ENCODE measurements at regions of chr22 and their contacts with region 1.

Region 1: GRCh38 chr22:30634471-30635233 is 929 bp upstream of the SLC35E4 start:
- DNase-seq: peak; percentile 83 to 93 (median 85)
- ATAC-seq: peak; percentile 65 to 82 (median 74)
- H3K4me3 ChIP-seq: peak overlapping the region in 11 of 12 donors; percentile 6 to 90 (median 77)
- H3K27ac ChIP-seq: peak overlapping the region; percentile 23 to 98 (median 88)
- H3K4me1 ChIP-seq: peaks cover 0 to 37% (median 27%) of the 10 kb centered on the region in 12 donors
- H3K27me3 ChIP-seq: no peaks in the 10 kb centered on the region
- CTCF ChIP-seq: peak; percentile 91 to 96 (median 94)
- POLR2A ChIP-seq: no peak

Region 2: GRCh38 chr22:30667494-30668385 is 33.1 kb after region 1 on chr22 and contains the start of gene DUSP18:
- intact Hi-C with region 1: loop called in 4 of 10 experiments (anchors 2 to 5 kb)
- DNase-seq: peak; percentile 92 to 98 (median 94)
- ATAC-seq: peak; percentile 97 to 100 (median 99)
- H3K4me3 ChIP-seq: peak within 1 kb of the TSS; percentile 48 to 87 (median 76)
- H3K27ac ChIP-seq: peak within 1 kb of the TSS in 10 of 12 donors; percentile 9 to 71 (median 53)
- H3K4me1 ChIP-seq: peaks cover 0 to 19% (median 11%) of the 10 kb centered on the region in 12 donors
- H3K27me3 ChIP-seq: no peaks in the 10 kb centered on the region
- CTCF ChIP-seq: peak in 10 of 12 donors; percentile 17 to 53 (median 35)
- POLR2A ChIP-seq: peak in 1 of 2 donors; percentile 72
- total RNA-seq, gene DUSP18: 1.8 to 6.1 (median 3.1) TPM

Region 3: GRCh38 chr22:30694171-30694639 is 59.6 kb after region 1 on chr22:
- intact Hi-C with region 1: loop called in 1 of 10 experiments (anchors 2 kb)
- DNase-seq: peak; percentile 31 to 67 (median 45)
- ATAC-seq: peak in 3 of 4 donors; percentile 48 to 77 (median 70)
- H3K4me3 ChIP-seq: peak overlapping the region; percentile 33 to 72 (median 59)
- H3K27ac ChIP-seq: peak overlapping the region in 9 of 12 donors; percentile 25 to 75 (median 53)
- H3K4me1 ChIP-seq: peaks cover 0 to 17% (median 8%) of the 10 kb centered on the region in 12 donors
- H3K27me3 ChIP-seq: peaks cover 0 to 20% (median 0%) of the 10 kb centered on the region in 9 donors
- CTCF ChIP-seq: peak in 1 of 12 donors; percentile 1
- POLR2A ChIP-seq: no peak

Region 4: DNA sequence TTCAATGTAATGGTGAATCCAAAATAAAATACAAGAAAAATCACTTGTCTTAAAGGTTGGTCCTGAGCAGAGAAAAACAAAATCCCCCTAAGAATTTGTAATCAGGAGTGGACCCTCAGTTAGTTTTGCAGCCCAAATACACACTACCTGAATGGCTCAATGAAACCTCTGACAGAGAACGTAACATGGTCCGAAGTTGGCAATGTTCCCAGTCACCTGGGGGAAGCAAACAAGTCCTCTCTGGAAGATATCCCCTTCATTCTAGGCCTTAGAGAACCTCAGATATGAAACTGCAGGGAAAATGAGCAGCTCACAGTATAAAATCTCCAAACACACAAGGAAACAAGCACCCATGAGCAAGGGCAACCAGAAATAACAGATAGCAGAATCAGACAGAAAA is 275.7 kb after region 1 on chr22:
- intact Hi-C with region 1: loop called in 2 of 10 experiments (anchors 5 to 10 kb)
- DNase-seq: no peak
- ATAC-seq: no peak
- H3K4me3 ChIP-seq: no peak overlapping the region
- H3K27ac ChIP-seq: no peak overlapping the region
- H3K4me1 ChIP-seq: no peaks in the 10 kb centered on the region
- H3K27me3 ChIP-seq: no peaks in the 10 kb centered on the region
- CTCF ChIP-seq: no peak
- POLR2A ChIP-seq: no peak

Measured in heart left ventricle (tissue), 16 donors.